ENCODE measurements at regions of chr1 and their contacts with region 1.

Region 1: DNA sequence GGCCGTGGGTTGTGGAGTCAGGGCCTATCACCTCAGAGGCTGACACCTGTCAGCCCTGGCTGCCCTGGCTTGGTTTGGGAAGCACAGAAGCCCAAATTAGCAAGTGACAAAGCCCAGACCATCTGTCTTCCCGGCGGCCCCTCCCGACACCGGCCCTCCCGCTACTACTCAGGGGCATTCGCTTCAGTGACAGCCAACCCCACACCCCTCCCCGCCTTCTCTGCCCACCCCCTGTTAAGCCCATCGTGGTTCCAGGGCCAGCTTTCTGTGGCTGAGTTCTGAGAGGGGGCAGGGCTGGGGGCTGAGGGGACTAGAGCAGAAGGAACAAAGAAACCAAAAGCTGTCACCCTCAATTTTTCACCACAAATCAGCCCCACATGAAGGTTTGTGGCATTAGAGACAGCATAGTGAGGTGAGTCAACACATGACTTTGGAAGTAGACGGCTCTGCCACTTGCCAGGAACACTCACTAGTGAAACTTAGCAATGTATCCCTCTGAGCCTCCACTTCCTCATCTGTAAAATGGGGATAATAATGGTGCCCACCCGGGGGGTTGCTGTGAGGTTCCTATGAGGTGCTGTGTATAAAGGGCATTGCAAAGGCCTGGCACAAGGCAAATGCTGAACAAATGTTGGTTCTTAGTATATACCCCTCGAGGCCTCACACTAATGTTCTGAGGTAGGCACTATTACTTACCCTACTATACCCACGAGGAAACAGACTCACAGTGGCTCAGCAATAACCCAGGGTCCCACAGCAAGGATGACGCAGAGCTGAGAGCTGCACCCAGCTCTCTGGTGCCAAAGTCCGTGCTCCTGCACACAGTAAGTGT is 5.2 kb upstream of the TNNI1 start:
- DNase-seq: no peak

Region 2: DNA sequence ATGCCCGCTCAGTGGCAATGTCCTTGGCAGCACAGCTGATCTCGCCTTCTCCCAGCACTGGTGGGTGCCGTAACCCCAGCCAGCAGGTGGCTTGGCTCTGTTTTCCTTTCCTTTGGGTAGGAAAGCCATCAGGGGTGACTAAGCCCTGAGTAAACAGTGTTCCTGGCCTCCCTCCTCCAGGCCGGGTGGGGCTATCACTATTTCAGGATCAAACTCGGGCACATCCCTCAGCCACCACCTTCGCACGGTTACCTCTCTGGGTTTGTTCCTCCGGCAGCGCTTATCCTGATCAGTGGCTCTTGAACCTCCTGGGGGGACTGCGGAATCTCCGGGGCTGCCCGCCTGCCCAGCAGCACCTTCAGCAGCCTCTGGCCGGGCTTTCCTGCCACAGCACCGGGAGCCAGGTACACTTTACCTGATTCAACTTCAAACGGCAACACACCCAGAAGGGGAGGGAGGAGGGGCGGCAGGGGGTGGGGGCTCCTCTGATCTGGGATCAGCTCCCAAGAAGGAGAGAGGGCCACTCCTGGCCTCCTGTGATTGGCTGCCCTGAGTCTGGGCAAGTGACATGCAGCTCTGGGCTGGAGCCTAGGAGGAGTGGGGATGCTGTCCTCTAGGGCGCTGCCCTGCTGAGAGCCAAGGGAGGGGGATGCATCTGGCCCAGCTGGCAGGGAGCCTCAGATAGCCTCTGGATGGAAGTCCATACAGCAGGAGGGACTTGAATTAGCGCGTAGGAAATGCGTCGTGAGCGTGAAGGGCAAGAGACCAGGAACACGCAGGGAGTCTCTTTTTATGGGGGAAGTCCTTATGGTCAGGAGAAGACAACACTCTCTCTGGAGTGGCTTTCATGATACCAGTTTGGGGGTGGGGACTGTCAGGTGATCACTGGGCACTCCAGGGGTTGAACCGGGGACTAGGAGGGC is 299.6 kb before region 1 on chr1 and contains the start of gene ASCL5:
- intact Hi-C with region 1: loop called in 1 of 2 experiments (anchors 5 kb)
- DNase-seq: no peak
- total RNA-seq, gene ASCL5: not detected

Region 3: DNA sequence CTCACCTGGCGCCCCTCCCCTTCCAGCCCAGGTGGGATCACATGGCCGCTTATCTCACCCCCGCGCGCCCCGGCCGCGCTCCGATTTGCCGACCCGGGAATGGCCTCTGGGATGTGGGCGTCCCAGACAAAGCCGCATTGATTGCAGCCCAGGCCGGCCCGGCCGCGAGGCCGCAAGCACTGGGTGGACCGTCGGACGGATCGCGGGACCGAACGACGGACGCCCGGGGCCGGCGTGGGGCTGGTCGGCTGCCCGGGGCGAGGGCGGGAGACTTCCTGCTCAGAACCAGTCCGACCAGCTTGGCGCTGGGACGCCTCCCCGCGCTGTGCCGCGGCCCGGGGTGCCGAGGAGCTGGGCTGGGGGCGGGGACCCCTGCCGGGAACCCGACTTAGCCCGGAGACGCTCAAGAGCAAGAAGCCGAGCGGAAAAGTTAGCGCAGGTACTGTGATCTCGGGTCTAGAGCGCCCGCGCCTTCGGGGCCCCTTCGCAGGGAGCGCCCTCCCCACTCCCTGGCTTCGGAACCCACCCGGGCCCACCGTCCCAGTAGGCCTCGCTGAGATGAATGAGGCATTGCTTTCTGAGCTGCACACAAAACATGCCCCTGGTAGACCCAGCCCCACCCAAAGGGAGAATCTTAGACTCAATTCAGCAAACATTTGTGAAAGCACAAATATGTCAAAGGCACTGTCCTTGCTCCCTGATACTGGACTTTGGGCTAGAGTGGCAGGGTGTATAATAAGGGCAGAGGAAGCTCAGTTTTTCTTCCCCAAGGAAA is 27.2 kb before region 1 on chr1:
- intact Hi-C with region 1: no loop called
- DNase-seq: no peak

Region 4: DNA sequence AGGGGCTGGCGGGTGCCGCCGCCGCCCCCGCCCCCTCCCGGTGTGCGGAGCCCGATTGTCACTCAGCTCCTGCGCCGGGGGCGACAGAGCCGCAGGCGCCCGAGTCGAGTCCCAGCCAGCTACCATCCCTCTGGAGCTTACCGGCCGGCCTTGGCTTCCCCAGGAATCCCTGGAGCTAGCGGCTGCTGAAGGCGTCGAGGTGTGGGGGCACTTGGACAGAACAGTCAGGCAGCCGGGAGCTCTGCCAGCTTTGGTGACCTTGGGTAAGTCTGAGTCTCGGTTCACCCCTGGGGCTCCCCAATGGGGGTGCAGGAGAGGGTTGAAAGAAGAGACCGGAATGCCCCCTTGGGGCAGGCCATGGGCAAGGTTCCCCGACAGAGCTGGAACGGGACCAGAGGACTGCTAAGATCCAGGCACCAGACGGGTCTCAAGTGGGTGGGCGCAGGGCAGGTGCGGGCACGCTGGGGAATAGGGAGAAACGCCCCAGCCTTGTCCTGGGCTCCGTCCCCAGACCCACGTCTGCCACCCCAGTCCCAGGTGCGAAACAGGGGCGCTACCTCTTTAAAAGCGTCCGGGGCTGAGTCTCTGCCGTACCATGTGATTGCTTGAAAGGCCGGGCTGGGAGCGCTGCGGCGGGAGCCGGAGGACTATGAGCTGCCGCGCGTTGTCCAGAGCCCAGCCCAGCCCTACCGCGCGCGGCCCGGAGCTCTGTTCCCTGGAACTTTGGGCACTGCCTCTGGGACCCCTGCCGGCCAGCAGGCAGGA is 1701.2 kb after region 1 on chr1 and contains the start of gene ADORA1:
- intact Hi-C with region 1: loop called in 1 of 2 experiments (anchors 5 kb)
- DNase-seq: peak; percentile 87
- total RNA-seq, gene ADORA1: 0.32 to 1.3 TPM